GM12878 (cell line): ENCODE measurements at regions of chr21 and their contacts with region 1.

Region 1: DNA sequence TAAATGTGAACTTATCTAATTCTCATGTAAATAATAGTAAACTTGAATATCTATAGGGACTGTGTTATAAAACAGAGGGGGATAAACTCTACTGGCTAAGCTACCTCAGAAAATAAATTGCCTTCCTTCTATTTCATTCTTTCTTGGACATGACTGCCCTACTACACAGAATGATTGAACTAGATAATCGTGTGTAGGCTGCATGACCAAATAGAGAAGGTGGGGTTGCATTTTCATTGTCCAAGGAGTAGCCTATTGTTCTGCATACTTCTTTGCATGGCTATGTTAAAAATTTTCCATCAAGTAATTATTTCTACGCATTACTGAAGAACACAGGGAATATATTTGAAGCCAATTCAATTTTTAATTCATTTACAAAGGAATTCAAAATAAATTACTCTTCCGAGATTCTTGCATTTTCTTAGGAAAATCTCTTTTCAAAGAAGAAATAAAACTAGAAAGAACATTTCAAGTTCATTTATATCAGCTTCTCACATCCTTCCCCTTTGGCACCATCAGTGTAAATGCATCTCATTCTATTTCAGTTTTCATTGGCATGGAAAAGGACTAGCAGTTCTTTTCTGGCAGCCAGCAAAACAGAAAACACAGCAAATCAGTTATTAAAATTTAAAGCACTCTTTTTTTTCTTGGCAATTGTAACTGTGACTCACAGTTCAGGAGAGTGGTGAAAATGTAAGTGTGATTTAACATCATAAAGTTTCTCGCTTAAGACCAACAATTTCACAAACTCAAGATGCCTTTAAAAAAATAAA is 714.7 kb downstream of the NCAM2 start:
- DNase-seq: no peak
- ATAC-seq: no peak
- H3K4me3 ChIP-seq: no peak overlapping the region
- H3K27ac ChIP-seq: no peak overlapping the region
- H3K4me1 ChIP-seq: no peaks in the 10 kb centered on the region
- H3K27me3 ChIP-seq: no peaks in the 10 kb centered on the region
- CTCF ChIP-seq: no peak
- EP300 ChIP-seq: no peak
- POLR2A ChIP-seq: no peak
- RAD21 ChIP-seq: no peak

Region 2: DNA sequence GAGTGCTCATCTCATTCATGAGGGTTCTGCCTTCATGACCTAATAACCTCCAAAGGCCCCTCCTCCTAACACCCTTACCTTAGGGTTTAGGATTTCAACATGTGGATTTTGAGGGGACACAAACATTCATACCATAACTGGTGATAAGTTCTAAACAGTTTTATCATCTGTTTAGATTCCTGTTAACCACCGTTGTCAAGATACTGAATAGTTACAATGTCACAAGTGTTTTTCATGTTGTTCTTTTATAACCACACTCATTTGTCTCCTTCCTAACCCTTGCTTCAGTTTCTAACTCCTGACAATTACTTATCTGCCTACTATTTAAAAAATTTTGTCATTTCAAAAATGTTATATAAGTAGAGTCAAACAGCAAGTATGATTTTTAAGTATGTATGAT is 628.8 kb before region 1 on chr21:
- CTCF ChIA-PET with region 1: no interaction called
- POLR2A ChIA-PET with region 1: no interaction called
- RAD21 ChIA-PET with region 1: no interaction called
- SMC1A ChIA-PET with region 1: no interaction called
- in situ Hi-C with region 1: no loop called
- intact Hi-C with region 1: no loop called
- DNase-seq: no peak
- ATAC-seq: no peak
- H3K4me3 ChIP-seq: no peak overlapping the region
- H3K27ac ChIP-seq: no peak overlapping the region
- H3K4me1 ChIP-seq: no peaks in the 10 kb centered on the region
- H3K27me3 ChIP-seq: no peaks in the 10 kb centered on the region
- CTCF ChIP-seq: no peak
- EP300 ChIP-seq: no peak
- POLR2A ChIP-seq: no peak
- RAD21 ChIP-seq: no peak

Region 3: DNA sequence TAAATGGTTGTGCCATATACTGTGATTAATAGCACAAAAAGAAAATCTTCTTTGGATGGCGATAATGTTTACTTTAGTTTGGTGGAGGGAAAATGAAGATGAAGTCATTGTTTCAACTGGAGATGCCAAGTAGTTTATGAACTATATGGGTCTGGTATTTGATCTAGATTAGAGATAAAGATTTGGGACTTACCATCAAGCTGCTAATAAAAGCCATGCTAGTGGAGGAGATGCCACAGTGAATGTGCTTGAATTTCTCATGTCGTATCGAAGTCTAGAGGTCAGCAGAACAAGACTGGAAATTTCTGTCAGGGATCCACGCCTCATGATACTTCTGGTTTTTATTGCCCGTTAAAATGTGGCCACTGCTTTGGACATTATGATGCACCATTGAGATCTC is 27.3 kb after region 1 on chr21:
- CTCF ChIA-PET with region 1: no interaction called
- POLR2A ChIA-PET with region 1: no interaction called
- RAD21 ChIA-PET with region 1: no interaction called
- SMC1A ChIA-PET with region 1: no interaction called
- in situ Hi-C with region 1: no loop called
- intact Hi-C with region 1: loop called (anchors 1 kb)
- DNase-seq: no peak
- ATAC-seq: no peak
- H3K4me3 ChIP-seq: no peak overlapping the region
- H3K27ac ChIP-seq: no peak overlapping the region
- H3K4me1 ChIP-seq: no peaks in the 10 kb centered on the region
- H3K27me3 ChIP-seq: no peaks in the 10 kb centered on the region
- CTCF ChIP-seq: no peak
- EP300 ChIP-seq: no peak
- POLR2A ChIP-seq: no peak
- RAD21 ChIP-seq: no peak

Region 4: GRCh38 chr21:21788591-21788990 is 75.7 kb after region 1 on chr21:
- CTCF ChIA-PET with region 1: no interaction called
- POLR2A ChIA-PET with region 1: no interaction called
- RAD21 ChIA-PET with region 1: no interaction called
- SMC1A ChIA-PET with region 1: no interaction called
- in situ Hi-C with region 1: no loop called
- intact Hi-C with region 1: no loop called
- DNase-seq: no peak
- ATAC-seq: no peak
- H3K4me3 ChIP-seq: no peak overlapping the region
- H3K27ac ChIP-seq: no peak overlapping the region
- H3K4me1 ChIP-seq: no peaks in the 10 kb centered on the region
- H3K27me3 ChIP-seq: no peaks in the 10 kb centered on the region
- CTCF ChIP-seq: no peak
- EP300 ChIP-seq: no peak
- POLR2A ChIP-seq: no peak
- RAD21 ChIP-seq: no peak